ENCODE measurements at regions of chr1 and their contacts with region 1.

Region 1: GRCh38 chr1:225777583-225778336 is at the start of gene SRP9:
- DNase-seq: peak; percentile 97
- ATAC-seq: peak; percentile 96
- H3K4me3 ChIP-seq: peak within 1 kb of the TSS; percentile 87 to 95
- H3K27ac ChIP-seq: peak within 1 kb of the TSS; percentile 82
- H3K4me1 ChIP-seq: peaks cover 8 to 17% of the 10 kb centered on the region in 2 experiments; a peak in 3 of 4 replicates
- H3K27me3 ChIP-seq: no peaks in the 10 kb centered on the region
- CTCF ChIP-seq: peak; percentile 83 to 89 (median 88)
- POLR2A ChIP-seq: peak; percentile 50
- RAD21 ChIP-seq: peak; percentile 81
- total RNA-seq, gene SRP9: 220 TPM

Region 2: DNA sequence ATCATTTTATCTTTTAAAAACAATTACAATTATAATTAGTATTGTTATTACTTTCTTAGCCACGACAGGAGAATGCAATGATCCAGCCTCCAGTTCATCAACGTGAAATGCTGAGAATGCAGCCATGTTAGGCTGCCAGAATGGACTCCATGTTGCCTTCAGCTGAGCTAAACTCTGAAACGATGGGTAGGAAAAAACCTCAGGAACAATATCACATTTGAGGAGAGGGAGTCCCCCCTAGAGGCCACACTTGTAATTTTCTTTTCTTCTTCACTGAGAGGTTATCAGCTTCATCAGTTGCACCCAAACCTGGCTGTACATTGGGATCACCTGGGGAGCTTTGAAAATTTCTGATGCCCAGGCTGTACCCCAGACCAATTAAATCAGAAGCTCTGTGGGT is 882.8 kb before region 1 on chr1:
- CTCF ChIA-PET with region 1: no interaction called
- POLR2A ChIA-PET with region 1: no interaction called
- RAD21 ChIA-PET with region 1: no interaction called
- intact Hi-C with region 1: no loop called
- DNase-seq: peak; percentile 18
- ATAC-seq: peak; percentile 79
- H3K4me3 ChIP-seq: no peak overlapping the region
- H3K27ac ChIP-seq: no peak overlapping the region
- H3K4me1 ChIP-seq: no peaks in the 10 kb centered on the region
- H3K27me3 ChIP-seq: no peaks in the 10 kb centered on the region
- CTCF ChIP-seq: peak; percentile 26 to 47 (median 28); a peak in 4 of 6 replicates
- POLR2A ChIP-seq: no peak
- RAD21 ChIP-seq: peak; percentile 62

Region 3: DNA sequence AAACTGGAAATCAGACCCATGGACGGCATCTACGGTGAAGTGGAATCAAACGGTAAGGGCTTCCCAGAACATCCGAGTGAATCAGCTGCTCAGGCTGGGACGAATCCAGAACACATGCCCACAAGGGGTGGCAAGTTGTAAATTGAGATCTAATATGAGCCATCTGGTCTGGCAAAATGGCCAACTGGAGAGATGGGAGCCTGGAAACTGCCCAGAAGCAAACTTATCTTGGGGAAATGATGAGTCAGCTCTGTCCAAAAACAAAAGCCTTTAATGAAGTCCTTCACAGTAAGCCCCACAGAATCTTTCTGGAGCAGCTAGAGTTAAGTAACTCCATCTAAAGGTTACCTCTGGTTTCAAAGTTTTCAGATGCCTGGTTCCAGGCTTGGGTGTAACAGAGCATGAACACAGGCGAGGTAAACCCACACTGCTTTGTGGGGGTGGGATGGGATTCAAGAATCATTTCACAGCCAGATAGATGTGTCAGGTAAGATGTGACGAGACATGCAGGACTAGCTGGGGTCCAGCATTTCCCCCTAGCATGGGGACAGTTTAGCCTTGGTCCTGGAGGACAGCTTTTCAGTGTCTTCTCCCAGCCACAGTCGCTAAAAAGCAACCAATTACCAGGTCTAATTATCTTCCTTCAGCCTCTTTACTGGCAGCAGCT is 10.7 kb before region 1 on chr1:
- CTCF ChIA-PET with region 1: interaction called, 11 read pairs
- POLR2A ChIA-PET with region 1: interaction called, 4 read pairs
- RAD21 ChIA-PET with region 1: no interaction called
- intact Hi-C with region 1: no loop called
- DNase-seq: no peak
- ATAC-seq: no peak
- H3K4me3 ChIP-seq: no peak overlapping the region
- H3K27ac ChIP-seq: no peak overlapping the region
- H3K4me1 ChIP-seq: peaks cover 12 to 20% of the 10 kb centered on the region in 2 experiments; a peak in 2 of 4 replicates
- H3K27me3 ChIP-seq: no peaks in the 10 kb centered on the region
- CTCF ChIP-seq: no peak
- POLR2A ChIP-seq: no peak
- RAD21 ChIP-seq: no peak

Region 4: DNA sequence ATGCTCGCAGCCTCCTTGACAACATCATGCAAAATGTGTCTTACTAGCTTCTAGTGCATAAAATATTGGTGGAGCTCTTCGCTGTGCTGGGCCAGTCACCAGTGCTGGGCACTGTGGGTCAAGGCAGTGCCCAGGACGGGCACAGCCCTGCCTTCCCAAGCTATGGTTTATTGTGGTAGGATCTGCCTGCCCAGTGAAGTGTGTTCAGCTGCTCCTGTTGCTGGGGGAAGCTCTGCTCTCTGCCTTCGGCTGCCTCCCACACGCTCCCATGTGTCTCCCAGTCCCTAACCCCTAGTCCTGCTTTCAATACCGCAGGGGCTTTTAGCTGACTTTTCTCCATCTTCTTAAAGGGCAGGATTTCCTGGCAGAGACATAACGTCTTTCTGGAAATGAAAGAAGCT is 47.8 kb after region 1 on chr1:
- CTCF ChIA-PET with region 1: no interaction called
- POLR2A ChIA-PET with region 1: no interaction called
- RAD21 ChIA-PET with region 1: no interaction called
- intact Hi-C with region 1: no loop called
- DNase-seq: no peak
- ATAC-seq: no peak
- H3K4me3 ChIP-seq: no peak overlapping the region
- H3K27ac ChIP-seq: no peak overlapping the region
- H3K4me1 ChIP-seq: no peaks in the 10 kb centered on the region
- H3K27me3 ChIP-seq: no peaks in the 10 kb centered on the region
- CTCF ChIP-seq: no peak
- POLR2A ChIP-seq: no peak
- RAD21 ChIP-seq: no peak

Region 5: DNA sequence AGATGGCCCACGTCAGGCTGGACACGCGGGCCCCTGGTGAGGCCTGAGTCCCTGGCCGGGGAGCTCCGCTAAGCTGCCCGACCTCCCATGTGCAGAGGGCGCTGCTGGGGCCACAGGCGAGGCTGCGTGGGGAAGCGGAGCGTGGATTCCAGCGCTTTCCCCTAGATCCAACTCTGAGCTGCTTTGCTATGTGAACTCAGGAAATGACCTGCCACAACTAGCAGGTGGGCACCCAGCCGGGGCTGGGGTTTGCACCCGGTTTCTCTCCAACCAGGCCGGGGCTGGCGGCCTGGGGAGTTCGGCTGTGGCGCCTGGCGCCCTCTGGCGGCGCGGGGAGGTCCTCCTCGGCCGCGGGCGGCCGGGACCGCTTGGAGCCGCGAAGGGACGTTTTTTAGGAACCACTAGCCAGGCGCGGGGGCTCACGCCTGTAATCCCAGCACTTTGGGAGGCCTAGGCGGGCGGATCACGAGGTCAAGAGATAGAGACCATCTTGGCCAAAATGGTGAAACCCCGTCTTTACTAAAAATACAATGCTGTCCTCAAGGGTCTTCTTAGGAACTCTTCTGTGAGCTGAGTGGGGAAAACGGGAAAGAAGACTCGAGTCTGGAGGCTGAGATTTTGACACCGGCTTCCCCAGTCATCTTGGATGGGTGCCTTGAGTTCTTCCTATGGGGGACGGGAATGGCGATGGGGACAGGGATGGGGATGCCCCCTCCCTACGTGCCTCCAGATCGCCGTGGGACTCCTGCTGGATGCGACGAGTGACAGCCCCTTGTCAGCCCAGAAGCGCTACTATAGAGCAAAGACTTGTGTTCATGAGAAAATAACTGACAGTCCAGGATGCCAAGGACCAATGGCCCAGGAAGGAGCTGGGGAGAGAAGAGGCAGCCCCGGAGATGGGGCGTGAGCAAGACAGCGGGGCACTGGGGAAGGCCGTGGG is 133.7 kb after region 1 on chr1:
- CTCF ChIA-PET with region 1: interaction called, 5 read pairs
- POLR2A ChIA-PET with region 1: no interaction called
- RAD21 ChIA-PET with region 1: interaction called in 1 of 2 experiments, 4 read pairs
- intact Hi-C with region 1: loop called (anchors 2 kb)
- DNase-seq: peak; percentile 34
- ATAC-seq: peak; percentile 96
- H3K4me3 ChIP-seq: peak overlapping the region in 1 of 2 experiments; percentile 38; a peak in 1 of 4 replicates
- H3K27ac ChIP-seq: no peak overlapping the region
- H3K4me1 ChIP-seq: peaks cover 0 to 11% of the 10 kb centered on the region in 2 experiments; a peak in 3 of 4 replicates
- H3K27me3 ChIP-seq: no peaks in the 10 kb centered on the region
- CTCF ChIP-seq: peak; percentile 90 to 99 (median 95)
- POLR2A ChIP-seq: no peak
- RAD21 ChIP-seq: peak; percentile 89